ENCODE measurements at regions of chr3 and their contacts with region 1.

Region 1: GRCh38 chr3:34683851-34684250 is 885.4 kb downstream of the PDCD6IP start:
- DNase-seq: peak; percentile 22
- ATAC-seq: peak; percentile 80
- H3K4me3 ChIP-seq: no peak overlapping the region
- H3K27ac ChIP-seq: no peak overlapping the region
- H3K4me1 ChIP-seq: no peaks in the 10 kb centered on the region
- H3K27me3 ChIP-seq: no peaks in the 10 kb centered on the region
- CTCF ChIP-seq: peak; percentile 65
- EP300 ChIP-seq: no peak
- POLR2A ChIP-seq: no peak
- RAD21 ChIP-seq: 0 out of 2 replicates have a peak, but pooled peaks have one; percentile 14

Region 2: GRCh38 chr3:33883538-33883950 is 800.3 kb before region 1 on chr3:
- CTCF ChIA-PET with region 1: interaction called, 17 read pairs
- POLR2A ChIA-PET with region 1: no interaction called
- in situ Hi-C with region 1: loop called (anchors 5 kb)
- intact Hi-C with region 1: no loop called
- DNase-seq: peak; percentile 39
- ATAC-seq: peak; percentile 30
- H3K4me3 ChIP-seq: 0 out of 6 replicates have a peak overlapping the region, but pooled peaks of 1 of the 3 experiments have one; percentile 13
- H3K27ac ChIP-seq: no peak overlapping the region
- H3K4me1 ChIP-seq: peaks cover 12% of the 10 kb centered on the region
- H3K27me3 ChIP-seq: 0 out of 5 replicates have a peak, but pooled peaks cover 0 to 4% of the 10 kb centered on the region in 2 experiments
- CTCF ChIP-seq: peak; percentile 69
- EP300 ChIP-seq: no peak; a peak in 1 of 4 replicates
- POLR2A ChIP-seq: no peak
- RAD21 ChIP-seq: no peak

Region 3: GRCh38 chr3:33954956-33955355 is 728.9 kb before region 1 on chr3:
- CTCF ChIA-PET with region 1: interaction called, 4 read pairs
- POLR2A ChIA-PET with region 1: no interaction called
- in situ Hi-C with region 1: no loop called
- intact Hi-C with region 1: loop called (anchors 10 kb)
- DNase-seq: peak; percentile 37
- ATAC-seq: peak; percentile 82
- H3K4me3 ChIP-seq: no peak overlapping the region
- H3K27ac ChIP-seq: no peak overlapping the region
- H3K4me1 ChIP-seq: no peaks in the 10 kb centered on the region
- H3K27me3 ChIP-seq: peaks cover 0 to 3% of the 10 kb centered on the region in 2 experiments; a peak in 1 of 5 replicates
- CTCF ChIP-seq: peak; percentile 76
- EP300 ChIP-seq: no peak
- POLR2A ChIP-seq: no peak
- RAD21 ChIP-seq: peak; percentile 46

Region 4: DNA sequence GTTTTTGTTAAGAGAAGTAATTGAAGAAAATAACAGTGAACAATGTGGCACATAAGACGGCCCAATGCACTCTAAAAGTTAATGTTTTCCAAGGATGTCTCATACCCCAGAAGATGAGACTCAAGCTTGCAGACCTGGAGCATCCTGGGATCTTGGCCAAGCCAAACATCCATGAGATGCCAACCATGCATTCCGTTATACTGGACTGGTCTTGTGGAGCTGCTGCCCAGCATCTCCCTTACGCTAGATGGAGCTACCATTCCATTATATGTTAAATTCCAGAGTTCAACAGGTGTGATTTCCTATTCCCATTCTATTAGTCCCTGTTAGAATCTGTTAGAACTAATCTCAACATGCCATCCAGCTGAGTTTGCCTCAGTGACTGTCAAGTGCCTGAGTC is 703.6 kb before region 1 on chr3:
- CTCF ChIA-PET with region 1: interaction called, 10 read pairs
- POLR2A ChIA-PET with region 1: no interaction called
- in situ Hi-C with region 1: loop called (anchors 25 kb)
- intact Hi-C with region 1: no loop called
- DNase-seq: peak; percentile 66
- ATAC-seq: peak; percentile 99
- H3K4me3 ChIP-seq: no peak overlapping the region
- H3K27ac ChIP-seq: no peak overlapping the region
- H3K4me1 ChIP-seq: no peaks in the 10 kb centered on the region
- H3K27me3 ChIP-seq: no peaks in the 10 kb centered on the region
- CTCF ChIP-seq: peak; percentile 86
- EP300 ChIP-seq: no peak
- POLR2A ChIP-seq: no peak
- RAD21 ChIP-seq: peak; percentile 82

Region 5: GRCh38 chr3:34483311-34483887 is 200.5 kb before region 1 on chr3:
- CTCF ChIA-PET with region 1: no interaction called
- POLR2A ChIA-PET with region 1: no interaction called
- in situ Hi-C with region 1: no loop called
- intact Hi-C with region 1: no loop called
- DNase-seq: no peak
- ATAC-seq: no peak
- H3K4me3 ChIP-seq: no peak overlapping the region
- H3K27ac ChIP-seq: no peak overlapping the region
- H3K4me1 ChIP-seq: no peaks in the 10 kb centered on the region
- H3K27me3 ChIP-seq: no peaks in the 10 kb centered on the region
- CTCF ChIP-seq: no peak
- EP300 ChIP-seq: no peak
- POLR2A ChIP-seq: no peak
- RAD21 ChIP-seq: no peak

Region 6: DNA sequence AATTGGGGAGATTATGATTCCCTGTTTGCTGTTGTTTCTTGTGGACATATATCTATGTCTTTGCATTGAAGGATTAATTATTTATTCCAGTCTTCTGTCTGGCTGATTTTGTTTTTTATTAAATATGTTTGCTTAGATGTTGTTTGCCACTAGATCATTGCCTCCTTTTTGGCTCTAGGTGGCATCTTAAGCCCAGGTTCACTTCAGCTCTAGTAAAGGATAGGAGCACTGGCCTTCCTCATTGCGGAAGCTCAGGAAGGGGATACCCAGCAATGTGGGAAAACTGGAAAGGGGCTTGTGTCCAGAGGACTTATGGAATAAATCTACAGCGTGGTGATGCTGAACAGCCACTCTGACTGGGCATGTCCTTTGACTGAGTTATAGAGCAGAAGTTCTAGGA is 63.9 kb before region 1 on chr3:
- CTCF ChIA-PET with region 1: no interaction called
- POLR2A ChIA-PET with region 1: no interaction called
- in situ Hi-C with region 1: no loop called
- intact Hi-C with region 1: loop called (anchors 2 kb)
- DNase-seq: no peak
- ATAC-seq: no peak
- H3K4me3 ChIP-seq: no peak overlapping the region
- H3K27ac ChIP-seq: no peak overlapping the region
- H3K4me1 ChIP-seq: no peaks in the 10 kb centered on the region
- H3K27me3 ChIP-seq: no peaks in the 10 kb centered on the region; a peak in 1 of 5 replicates
- CTCF ChIP-seq: no peak
- EP300 ChIP-seq: no peak
- POLR2A ChIP-seq: no peak
- RAD21 ChIP-seq: no peak

Region 7: DNA sequence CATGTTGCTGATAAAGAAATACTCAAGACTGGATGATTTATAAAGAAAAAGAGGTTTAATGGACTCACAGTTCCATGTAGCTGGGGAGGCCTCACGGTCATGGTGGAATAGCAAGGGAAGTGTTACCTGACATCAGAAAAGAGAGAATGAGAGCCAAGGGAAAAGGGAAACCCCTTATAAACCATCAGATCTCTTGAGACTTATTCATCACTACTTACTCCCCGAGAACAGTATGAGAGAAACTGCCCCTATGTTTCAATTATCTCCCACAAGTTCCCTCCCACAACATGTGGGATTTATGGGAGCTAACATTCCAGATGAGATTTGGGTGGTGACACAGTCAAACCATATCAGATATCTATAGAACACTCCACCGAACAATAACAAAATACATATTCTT is 19.2 kb after region 1 on chr3:
- CTCF ChIA-PET with region 1: no interaction called
- POLR2A ChIA-PET with region 1: no interaction called
- in situ Hi-C with region 1: no loop called
- intact Hi-C with region 1: no loop called
- DNase-seq: no peak
- ATAC-seq: no peak
- H3K4me3 ChIP-seq: no peak overlapping the region
- H3K27ac ChIP-seq: no peak overlapping the region
- H3K4me1 ChIP-seq: no peaks in the 10 kb centered on the region
- H3K27me3 ChIP-seq: no peaks in the 10 kb centered on the region
- CTCF ChIP-seq: no peak
- EP300 ChIP-seq: no peak
- POLR2A ChIP-seq: no peak
- RAD21 ChIP-seq: no peak

Region 8: DNA sequence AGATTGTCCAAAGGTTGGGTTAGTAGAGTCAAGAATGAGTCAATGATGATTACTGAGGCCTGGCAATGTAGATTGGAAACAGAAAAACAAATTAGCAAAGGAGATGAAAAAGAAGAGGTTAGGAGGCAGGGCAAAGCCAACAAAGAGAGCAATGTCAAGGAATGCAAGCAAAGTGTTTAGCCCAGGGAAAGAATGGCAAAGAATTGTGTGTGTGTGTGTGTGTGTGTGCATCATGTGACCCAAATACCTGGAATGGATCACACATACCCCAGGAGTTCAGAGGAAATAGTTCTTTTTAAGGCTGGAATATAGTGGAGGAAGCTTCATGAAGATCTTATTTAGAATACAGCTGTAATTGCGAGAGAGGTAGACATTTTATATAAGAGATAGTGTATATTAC is 123.8 kb after region 1 on chr3:
- CTCF ChIA-PET with region 1: no interaction called
- POLR2A ChIA-PET with region 1: no interaction called
- in situ Hi-C with region 1: no loop called
- intact Hi-C with region 1: no loop called
- DNase-seq: no peak
- ATAC-seq: no peak
- H3K4me3 ChIP-seq: no peak overlapping the region
- H3K27ac ChIP-seq: no peak overlapping the region
- H3K4me1 ChIP-seq: no peaks in the 10 kb centered on the region
- H3K27me3 ChIP-seq: no peaks in the 10 kb centered on the region
- CTCF ChIP-seq: no peak
- EP300 ChIP-seq: no peak
- POLR2A ChIP-seq: no peak
- RAD21 ChIP-seq: no peak

Measured in HepG2 (cell line).